ENCODE measurements at regions of chr1 and their contacts with region 1.

Region 1: GRCh38 chr1:46223472-46223943 is 20.4 kb downstream of the LURAP1 start:
- DNase-seq: peak; percentile 69
- H3K4me3 ChIP-seq: no peak overlapping the region
- CTCF ChIP-seq: peak; percentile 87

Region 2: GRCh38 chr1:45974541-45975269 is 248.8 kb before region 1 on chr1:
- CTCF ChIA-PET with region 1: no interaction called
- POLR2A ChIA-PET with region 1: no interaction called
- DNase-seq: no peak
- H3K4me3 ChIP-seq: no peak overlapping the region
- CTCF ChIP-seq: no peak

Region 3: DNA sequence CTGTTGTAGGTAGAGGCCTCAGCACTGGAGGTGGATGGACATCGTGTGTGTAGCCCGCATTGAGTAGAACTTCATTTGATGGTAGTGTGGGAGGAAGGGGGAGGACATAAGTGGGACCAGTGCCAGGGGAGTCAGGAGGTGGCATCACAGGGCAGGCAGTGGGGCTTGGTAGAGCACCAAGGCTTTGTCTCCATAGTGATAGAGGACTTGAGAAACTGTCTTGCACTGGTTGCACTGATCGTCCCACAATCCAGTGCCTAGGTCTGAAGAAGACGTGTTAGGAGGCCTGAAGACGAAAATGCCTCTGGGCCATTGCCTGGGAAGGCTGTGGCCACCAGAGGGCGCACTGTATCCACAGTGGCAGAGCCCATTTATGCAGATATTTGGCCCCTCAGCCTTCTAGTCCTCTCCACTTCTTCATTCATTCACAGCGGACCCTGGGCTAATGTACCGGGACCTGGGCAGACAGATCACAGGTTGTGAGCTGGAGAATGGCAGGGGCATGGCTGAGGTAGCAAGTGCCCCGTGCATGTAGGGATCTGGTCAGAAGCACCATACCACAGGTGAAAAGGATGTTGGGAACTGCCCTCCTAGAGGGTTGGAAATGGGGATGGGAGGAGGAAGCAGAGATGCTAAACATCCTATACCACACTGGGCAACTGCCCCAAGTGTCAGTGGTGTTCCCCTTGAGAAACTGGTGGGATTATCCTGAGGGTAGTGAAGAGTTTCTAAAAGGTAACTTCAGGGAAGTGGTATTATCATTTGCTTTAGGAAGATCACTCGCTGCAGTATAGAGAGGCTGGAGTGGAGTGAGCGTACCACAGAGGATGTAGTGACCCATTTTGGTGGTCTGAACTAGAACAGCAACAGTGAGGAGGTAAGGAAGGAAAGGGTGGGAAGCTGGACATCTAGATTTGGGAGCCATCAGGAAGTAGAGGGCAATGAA is 186.3 kb before region 1 on chr1:
- CTCF ChIA-PET with region 1: interaction called, 218 read pairs
- POLR2A ChIA-PET with region 1: interaction called, 3 read pairs
- DNase-seq: peak; percentile 14
- H3K4me3 ChIP-seq: no peak overlapping the region
- CTCF ChIP-seq: peak; percentile 96

Region 4: DNA sequence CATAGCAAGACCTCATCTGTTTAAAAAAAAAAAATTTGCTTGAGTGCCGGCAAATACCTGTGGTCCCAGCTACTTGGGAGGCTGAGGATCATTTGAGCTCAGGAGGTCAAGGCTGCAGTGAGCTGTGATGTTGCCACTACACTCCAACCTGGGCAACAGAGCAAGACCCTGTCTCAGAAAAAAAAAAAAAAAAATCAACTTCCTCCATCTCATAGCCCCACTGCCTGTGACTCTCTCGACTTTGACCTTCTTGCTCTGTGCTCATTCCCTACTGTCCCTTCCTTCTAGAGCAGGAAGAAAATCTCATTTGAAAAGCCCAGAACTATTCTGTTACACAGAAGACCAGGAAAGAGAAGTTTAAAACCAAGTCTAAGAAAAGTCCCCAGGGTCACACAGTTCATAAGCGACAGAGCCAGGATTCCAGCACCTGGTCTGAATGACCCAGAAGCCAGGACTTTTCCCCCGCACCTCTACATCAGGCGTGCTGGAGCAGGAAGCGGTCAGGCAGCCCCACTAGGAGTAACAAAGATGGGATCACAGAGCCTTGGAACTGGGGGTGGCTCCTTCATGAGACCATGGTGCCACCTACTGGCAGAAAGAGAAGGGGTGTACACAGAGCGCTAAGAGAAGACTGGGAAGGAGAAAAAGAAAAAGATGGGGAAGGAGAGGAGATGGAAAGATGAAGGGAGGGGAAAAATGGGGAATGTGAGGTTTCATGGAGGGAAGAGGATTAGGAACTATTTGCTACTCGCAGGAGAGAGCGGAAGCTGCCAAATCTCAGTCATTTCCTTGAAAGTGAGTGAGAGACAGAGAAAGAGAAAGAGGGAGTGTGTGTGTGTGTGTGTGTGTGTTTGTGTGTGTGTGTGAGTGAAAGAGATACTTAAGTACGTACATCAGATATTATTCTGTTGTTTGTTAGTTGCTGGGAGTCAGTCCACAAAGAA is 44.1 kb before region 1 on chr1:
- CTCF ChIA-PET with region 1: interaction called, 100 read pairs
- POLR2A ChIA-PET with region 1: no interaction called
- DNase-seq: peak; percentile 41
- H3K4me3 ChIP-seq: no peak overlapping the region
- CTCF ChIP-seq: peak; percentile 87

Region 5: DNA sequence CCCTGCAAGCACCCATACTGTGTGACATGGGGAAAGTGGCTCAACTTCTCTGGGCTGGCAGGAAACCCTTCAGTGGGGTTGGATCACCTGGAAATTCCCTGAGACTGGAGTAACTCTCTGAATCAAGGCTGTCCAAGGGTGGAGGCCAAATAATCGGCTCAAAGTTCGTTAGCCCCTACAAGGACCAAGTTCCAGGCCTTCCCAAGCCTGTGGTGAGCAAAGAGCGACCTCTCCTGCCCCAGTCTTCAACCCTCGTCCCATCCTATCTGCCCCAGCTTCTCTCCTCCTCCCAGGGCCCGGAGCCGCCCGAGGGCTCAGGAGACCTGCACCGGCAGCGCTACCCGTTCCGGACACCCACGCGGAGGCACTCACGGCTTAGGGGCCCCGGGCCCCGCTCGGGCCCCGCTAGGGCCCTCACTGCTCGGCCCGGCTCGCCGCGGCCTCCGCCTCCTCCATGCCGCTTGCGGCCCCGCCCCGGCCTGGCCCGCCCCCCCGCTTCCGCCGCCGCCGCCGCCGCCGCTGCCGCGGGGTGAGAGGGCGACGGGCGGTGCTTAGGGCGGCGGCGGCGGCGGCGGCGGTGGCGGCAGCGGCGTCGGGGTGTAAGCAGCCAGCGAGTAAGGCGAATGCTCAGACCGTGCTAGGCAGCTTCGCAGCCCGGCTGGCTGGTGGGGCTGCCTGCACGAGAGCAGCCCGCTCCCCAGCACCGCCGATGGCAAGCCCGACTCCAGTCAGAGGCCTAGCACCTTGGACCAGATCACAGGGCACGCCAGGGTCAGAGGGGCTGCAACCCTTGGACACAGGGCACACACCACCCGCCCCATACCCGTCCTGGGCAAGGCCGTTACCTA is 25.3 kb before region 1 on chr1 and contains the start of gene POMGNT1:
- CTCF ChIA-PET with region 1: interaction called, 102 read pairs
- POLR2A ChIA-PET with region 1: no interaction called
- DNase-seq: no peak
- H3K4me3 ChIP-seq: peak within 1 kb of the TSS; percentile 86
- CTCF ChIP-seq: peak; percentile 16

Region 6: DNA sequence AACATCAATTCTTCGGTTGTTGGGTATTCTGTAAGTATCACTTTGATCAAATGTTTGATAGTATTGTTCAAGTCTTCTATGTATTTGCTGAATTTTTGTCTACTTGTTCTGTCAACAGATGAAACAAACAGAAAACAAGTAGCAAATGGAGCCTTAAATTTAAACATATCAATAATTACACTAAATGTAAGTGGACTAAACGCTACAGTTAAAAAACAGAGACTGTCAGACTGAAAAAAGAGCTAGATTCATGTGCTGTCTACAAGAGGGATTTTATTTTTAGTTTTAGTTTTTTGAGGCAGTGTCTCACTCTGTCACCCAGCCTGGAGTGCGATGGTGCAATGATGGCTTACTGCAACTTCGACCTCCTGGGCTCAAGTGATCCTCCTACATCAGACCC is 13.4 kb after region 1 on chr1:
- CTCF ChIA-PET with region 1: interaction called, 63 read pairs
- POLR2A ChIA-PET with region 1: no interaction called
- DNase-seq: no peak
- H3K4me3 ChIP-seq: no peak overlapping the region
- CTCF ChIP-seq: no peak

Region 7: GRCh38 chr1:46340404-46341221 is 117.1 kb after region 1 on chr1 and contains the start of gene NSUN4:
- CTCF ChIA-PET with region 1: interaction called, 29 read pairs
- POLR2A ChIA-PET with region 1: no interaction called
- DNase-seq: peak; percentile 78
- H3K4me3 ChIP-seq: peak within 1 kb of the TSS; percentile 78
- CTCF ChIP-seq: peak; percentile 77

Measured in AG04449 (cell line).